RWPE1 (cell line): ENCODE measurements at regions of chr1 and their contacts with region 1.

Region 1: GRCh38 chr1:224647449-224647848 is 31.3 kb downstream of the CNIH3 start:
- DNase-seq: no peak
- H3K27ac ChIP-seq: no peak overlapping the region
- CTCF ChIP-seq: no peak

Region 2: GRCh38 chr1:224589006-224589405 is 58.4 kb before region 1 on chr1:
- CTCF ChIA-PET with region 1: interaction called, 10 read pairs
- POLR2A ChIA-PET with region 1: no interaction called
- DNase-seq: no peak
- H3K27ac ChIP-seq: no peak overlapping the region
- CTCF ChIP-seq: no peak

Region 3: GRCh38 chr1:224828691-224829090 is 181.2 kb after region 1 on chr1:
- CTCF ChIA-PET with region 1: no interaction called
- POLR2A ChIA-PET with region 1: no interaction called
- DNase-seq: no peak
- H3K27ac ChIP-seq: no peak overlapping the region
- CTCF ChIP-seq: no peak